OCI-LY7 (cell line): ENCODE measurements at regions of chr20 and their contacts with region 1.

Region 1: DNA sequence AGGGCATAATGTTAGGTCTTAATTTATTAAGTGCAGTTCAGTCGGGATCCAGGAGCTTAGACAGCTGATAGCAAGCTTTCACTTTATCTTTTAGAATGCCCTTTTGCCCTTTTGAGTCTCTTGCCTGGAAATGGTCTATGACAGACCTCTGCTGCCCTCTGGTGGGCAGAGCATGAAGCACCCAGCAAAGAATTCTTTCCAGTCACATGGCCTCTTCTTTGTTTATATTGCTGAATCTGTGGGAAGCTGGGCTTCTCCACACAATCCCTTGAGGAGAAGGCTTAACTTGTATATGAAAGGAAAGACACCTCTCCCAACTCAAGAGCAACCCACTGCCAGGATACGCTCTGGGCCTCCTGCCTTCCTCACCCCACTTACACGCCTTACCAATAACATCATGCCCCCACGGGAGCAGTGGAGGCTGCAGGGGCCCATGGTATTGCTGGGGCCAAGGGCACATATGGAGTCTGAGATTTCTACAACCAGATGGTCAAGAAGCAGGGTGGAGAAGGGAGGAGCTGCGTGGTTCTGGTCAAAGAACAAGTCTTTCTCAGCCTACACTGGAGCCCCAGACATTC is 20.4 kb downstream of the WFDC3 start:
- DNase-seq: peak; percentile 82
- H3K4me3 ChIP-seq: no peak overlapping the region
- H3K27ac ChIP-seq: no peak overlapping the region
- H3K4me1 ChIP-seq: peaks cover 3% of the 10 kb centered on the region
- CTCF ChIP-seq: peak; percentile 99

Region 2: DNA sequence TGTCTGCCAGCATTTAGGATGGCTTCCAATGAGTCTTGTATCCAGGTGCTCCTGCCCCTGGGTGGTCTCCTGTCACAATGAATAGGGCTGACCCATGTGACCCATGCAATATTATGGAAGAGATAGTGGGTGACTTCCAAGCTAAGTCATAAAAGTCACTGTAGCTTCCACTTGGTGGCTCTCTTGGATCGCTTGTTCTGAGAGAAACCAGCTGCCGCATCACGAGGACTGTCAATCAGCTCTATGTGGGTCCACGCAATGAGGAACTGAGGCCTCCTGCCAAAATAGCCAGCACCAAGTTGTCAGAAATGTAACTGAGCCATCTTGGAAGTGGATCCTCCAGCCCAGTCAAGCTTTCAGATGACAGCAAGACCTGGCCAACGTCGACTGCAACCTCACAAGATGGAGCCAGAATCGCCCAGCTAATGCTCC is 448.3 kb before region 1 on chr20:
- CTCF ChIA-PET with region 1: interaction called, 3 read pairs
- POLR2A ChIA-PET with region 1: interaction called, 3 read pairs
- intact Hi-C with region 1: loop called (anchors 1 kb)
- DNase-seq: peak; percentile 75
- H3K4me3 ChIP-seq: no peak overlapping the region
- H3K27ac ChIP-seq: no peak overlapping the region
- H3K4me1 ChIP-seq: peaks cover 68% of the 10 kb centered on the region
- CTCF ChIP-seq: peak; percentile 74

Region 3: GRCh38 chr20:45362804-45363610 is 408.3 kb before region 1 on chr20 and contains the start of gene SYS1:
- CTCF ChIA-PET with region 1: no interaction called
- POLR2A ChIA-PET with region 1: no interaction called
- intact Hi-C with region 1: loop called (anchors 5 kb)
- DNase-seq: peak; percentile 98
- H3K4me3 ChIP-seq: peak within 1 kb of the TSS; percentile 76
- H3K27ac ChIP-seq: peak within 1 kb of the TSS; percentile 54
- H3K4me1 ChIP-seq: peaks cover 43% of the 10 kb centered on the region
- CTCF ChIP-seq: peak; percentile 89
- total RNA-seq, gene SYS1: 22.3 and 37.6 TPM in 2 replicates

Region 4: DNA sequence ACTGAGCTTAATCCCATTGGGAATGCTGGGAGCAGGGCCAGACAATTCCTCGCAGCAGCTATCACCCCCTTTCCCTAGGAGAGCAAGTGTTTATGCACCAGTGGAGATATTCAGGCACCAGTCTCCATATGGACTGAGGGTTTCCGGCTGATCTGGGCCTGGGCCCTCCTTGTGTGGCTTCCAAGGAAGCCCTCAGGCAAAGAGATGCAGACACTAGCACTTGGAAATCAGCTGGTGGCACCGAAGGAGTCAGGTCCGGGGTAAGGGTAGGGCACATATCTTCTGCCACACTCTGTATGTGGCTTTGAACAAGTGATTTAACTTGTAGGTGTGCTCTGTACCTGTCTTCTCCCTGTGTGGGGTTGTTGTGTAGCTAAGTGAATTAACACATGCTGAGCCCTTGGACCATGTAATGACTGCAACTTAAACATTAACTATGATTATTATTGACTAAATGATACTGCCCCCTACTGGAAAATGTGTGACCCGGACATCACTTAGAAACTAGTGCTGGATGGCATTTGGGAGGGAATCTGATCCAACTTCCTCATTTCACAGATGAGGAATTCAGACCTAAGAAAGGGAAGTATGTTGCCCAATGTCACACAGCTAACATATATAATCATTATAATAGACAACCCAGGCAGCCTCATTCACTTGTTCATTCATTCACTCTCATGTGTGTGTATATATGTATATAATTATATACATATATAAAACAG is 321.0 kb before region 1 on chr20:
- CTCF ChIA-PET with region 1: interaction called, 6 read pairs
- POLR2A ChIA-PET with region 1: no interaction called
- intact Hi-C with region 1: loop called (anchors 5 kb)
- DNase-seq: peak; percentile 79
- H3K4me3 ChIP-seq: no peak overlapping the region
- H3K27ac ChIP-seq: no peak overlapping the region
- H3K4me1 ChIP-seq: peaks cover 11% of the 10 kb centered on the region
- CTCF ChIP-seq: peak; percentile 94

Region 5: DNA sequence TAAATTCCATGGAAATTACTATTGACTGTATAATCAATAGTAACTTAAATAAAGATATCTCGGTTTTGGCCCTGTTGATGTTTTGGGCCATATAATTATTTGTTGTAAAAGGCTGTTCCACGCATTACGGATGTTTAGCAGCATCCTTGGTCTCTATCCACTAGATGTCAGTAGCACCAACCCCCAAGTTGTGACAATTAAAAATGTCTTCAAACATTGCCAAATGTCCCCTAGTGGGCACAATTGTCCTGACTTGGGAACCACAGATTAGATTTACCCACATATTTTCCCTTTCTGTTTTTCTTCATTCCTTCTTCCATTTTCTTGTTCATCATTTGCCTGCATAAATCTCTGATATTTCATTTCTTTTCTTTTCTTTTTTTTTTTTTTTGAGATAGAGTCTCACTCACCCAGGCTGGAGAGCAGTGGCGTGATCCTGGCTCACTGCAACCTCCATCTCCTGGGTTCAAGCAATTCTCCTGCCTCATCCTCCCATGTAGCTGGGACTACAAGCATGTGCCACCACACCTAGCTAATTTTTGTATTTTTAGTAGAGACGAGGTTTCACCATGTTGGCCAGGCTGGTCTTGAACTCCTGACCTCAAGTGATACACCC is 178.6 kb before region 1 on chr20:
- CTCF ChIA-PET with region 1: no interaction called
- POLR2A ChIA-PET with region 1: no interaction called
- intact Hi-C with region 1: loop called (anchors 1 kb)
- DNase-seq: peak; percentile 77
- H3K4me3 ChIP-seq: no peak overlapping the region
- H3K27ac ChIP-seq: no peak overlapping the region
- H3K4me1 ChIP-seq: no peaks in the 10 kb centered on the region
- CTCF ChIP-seq: peak; percentile 97

Region 6: DNA sequence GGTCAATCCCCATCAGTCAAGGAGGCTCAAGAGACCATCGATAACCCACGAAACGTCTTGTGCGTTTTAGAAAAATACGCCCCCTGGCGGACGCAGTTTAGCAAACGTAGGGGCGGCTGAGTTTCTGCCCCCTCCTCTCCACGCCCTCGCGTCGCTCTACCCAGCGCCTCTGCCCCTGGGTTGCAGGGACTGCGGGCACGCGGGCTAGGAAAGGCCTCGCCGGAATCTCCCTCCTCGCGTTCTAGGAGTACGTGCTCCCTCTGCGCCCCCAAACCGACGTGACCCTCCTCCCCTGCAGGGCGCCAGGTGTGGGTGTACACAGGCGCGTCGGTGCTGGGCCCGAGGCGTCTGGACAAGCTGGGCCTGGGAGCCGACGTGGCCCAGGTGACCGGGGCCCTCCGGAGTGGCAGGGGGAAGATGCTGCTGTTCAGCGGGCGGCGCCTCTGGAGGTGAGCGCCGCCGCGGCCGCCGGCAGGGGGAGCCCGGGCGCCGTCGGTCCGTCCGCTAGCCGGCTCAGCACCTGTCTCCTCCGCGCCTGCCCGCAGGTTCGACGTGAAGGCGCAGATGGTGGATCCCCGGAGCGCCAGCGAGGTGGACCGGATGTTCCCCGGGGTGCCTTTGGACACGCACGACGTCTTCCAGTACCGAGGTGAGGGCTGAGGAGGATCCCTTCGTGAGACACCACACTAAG is 242.7 kb after region 1 on chr20:
- CTCF ChIA-PET with region 1: no interaction called
- POLR2A ChIA-PET with region 1: no interaction called
- intact Hi-C with region 1: no loop called
- DNase-seq: peak; percentile 81
- H3K4me3 ChIP-seq: peak overlapping the region; percentile 45
- H3K27ac ChIP-seq: no peak overlapping the region
- H3K4me1 ChIP-seq: peaks cover 9% of the 10 kb centered on the region
- CTCF ChIP-seq: peak; percentile 88